ENCODE measurements at regions of chr14 and their contacts with region 1.

Region 1: GRCh38 chr14:69101331-69101826 is 51.5 kb downstream of the DCAF5 start:
- DNase-seq: peak in 1 of 5 donors; percentile 44
- H3K4me3 ChIP-seq: no peak overlapping the region
- H3K27ac ChIP-seq: no peak overlapping the region
- H3K4me1 ChIP-seq: peaks cover 11% of the 10 kb centered on the region
- H3K27me3 ChIP-seq: no peaks in the 10 kb centered on the region
- CTCF ChIP-seq: peak; percentile 8 to 59 (median 50)
- EP300 ChIP-seq: no peak
- POLR2A ChIP-seq: no peak

Region 2: DNA sequence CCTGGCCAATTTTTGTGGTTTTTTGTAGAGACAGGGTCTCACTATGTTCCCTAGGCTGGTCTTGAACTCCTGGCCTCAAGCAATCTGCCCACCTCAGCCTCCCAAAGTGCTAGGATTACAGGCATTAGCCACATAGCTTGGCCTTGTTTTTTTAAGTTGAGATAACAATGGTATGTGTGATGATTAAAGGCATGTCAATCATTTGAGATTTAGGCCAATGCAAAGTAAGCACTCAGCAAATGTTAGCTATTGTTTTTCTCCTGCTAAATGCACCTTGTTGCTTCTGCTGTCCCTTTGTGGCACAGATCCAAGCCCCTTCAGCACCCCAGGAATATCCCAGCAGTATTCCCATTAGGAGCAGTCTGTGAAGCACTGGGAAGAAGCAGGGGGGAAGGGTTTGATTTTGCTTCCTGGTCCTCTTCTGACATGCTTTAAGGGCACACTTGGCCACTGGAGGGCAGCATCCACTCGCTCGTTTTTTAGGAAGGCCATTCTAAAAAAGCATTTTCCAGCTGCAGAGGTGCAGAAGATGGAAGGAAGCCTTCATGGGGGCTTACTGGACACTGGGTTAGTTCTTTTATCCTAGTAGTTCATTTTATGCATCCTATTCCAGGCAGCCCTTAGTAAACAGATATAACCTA is 238.3 kb before region 1 on chr14:
- intact Hi-C with region 1: loop called in 3 of 4 experiments (anchors 5 to 10 kb)
- DNase-seq: peak; percentile 66 to 87 (median 82)
- H3K4me3 ChIP-seq: no peak overlapping the region
- H3K27ac ChIP-seq: no peak overlapping the region
- H3K4me1 ChIP-seq: no peaks in the 10 kb centered on the region
- H3K27me3 ChIP-seq: no peaks in the 10 kb centered on the region
- CTCF ChIP-seq: peak; percentile 41 to 58 (median 56)
- EP300 ChIP-seq: no peak
- POLR2A ChIP-seq: no peak

Region 3: GRCh38 chr14:68905107-68905895 is 196.1 kb before region 1 on chr14:
- intact Hi-C with region 1: loop called in 3 of 4 experiments (anchors 5 kb)
- DNase-seq: no peak
- H3K4me3 ChIP-seq: no peak overlapping the region
- H3K27ac ChIP-seq: no peak overlapping the region
- H3K4me1 ChIP-seq: no peaks in the 10 kb centered on the region
- H3K27me3 ChIP-seq: no peaks in the 10 kb centered on the region
- CTCF ChIP-seq: no peak
- EP300 ChIP-seq: no peak
- POLR2A ChIP-seq: no peak

Region 4: GRCh38 chr14:69325646-69326265 is 224.4 kb after region 1 on chr14:
- intact Hi-C with region 1: no loop called
- DNase-seq: peak in 1 of 5 donors; percentile 17
- H3K4me3 ChIP-seq: no peak overlapping the region
- H3K27ac ChIP-seq: no peak overlapping the region
- H3K4me1 ChIP-seq: peaks cover 2% of the 10 kb centered on the region
- H3K27me3 ChIP-seq: no peaks in the 10 kb centered on the region
- CTCF ChIP-seq: no peak
- EP300 ChIP-seq: no peak
- POLR2A ChIP-seq: no peak

Region 5: GRCh38 chr14:69413483-69413882 is 312.1 kb after region 1 on chr14:
- intact Hi-C with region 1: no loop called
- DNase-seq: no peak
- H3K4me3 ChIP-seq: no peak overlapping the region
- H3K27ac ChIP-seq: no peak overlapping the region
- H3K4me1 ChIP-seq: peaks cover 1% of the 10 kb centered on the region
- H3K27me3 ChIP-seq: no peaks in the 10 kb centered on the region
- CTCF ChIP-seq: no peak
- EP300 ChIP-seq: no peak
- POLR2A ChIP-seq: no peak

Measured in ovary (tissue), 10 donors.